OCI-LY7 (cell line): ENCODE measurements at regions of chr6 and their contacts with region 1.

Region 1: GRCh38 chr6:29964887-29965562 is 22.7 kb downstream of the HLA-A start:
- DNase-seq: peak; percentile 97
- H3K4me3 ChIP-seq: peak overlapping the region; percentile 67
- H3K27ac ChIP-seq: peak overlapping the region; percentile 93
- H3K4me1 ChIP-seq: peaks cover 49% of the 10 kb centered on the region
- CTCF ChIP-seq: no peak

Region 2: GRCh38 chr6:29847871-29848630 is 117.0 kb before region 1 on chr6:
- CTCF ChIA-PET with region 1: no interaction called
- POLR2A ChIA-PET with region 1: interaction called, 3 read pairs
- intact Hi-C with region 1: loop called (anchors 1 kb)
- DNase-seq: peak; percentile 70
- H3K4me3 ChIP-seq: no peak overlapping the region
- H3K27ac ChIP-seq: no peak overlapping the region
- H3K4me1 ChIP-seq: no peaks in the 10 kb centered on the region
- CTCF ChIP-seq: peak; percentile 97

Region 3: GRCh38 chr6:29942275-29943052 is 22.6 kb before region 1 on chr6 and contains the start of gene HLA-A:
- CTCF ChIA-PET with region 1: no interaction called
- POLR2A ChIA-PET with region 1: interaction called, 7 read pairs
- intact Hi-C with region 1: loop called (anchors 1 kb)
- DNase-seq: peak; percentile 94
- H3K4me3 ChIP-seq: peak within 1 kb of the TSS; percentile 86
- H3K27ac ChIP-seq: peak within 1 kb of the TSS; percentile 55
- H3K4me1 ChIP-seq: peaks cover 32% of the 10 kb centered on the region
- CTCF ChIP-seq: peak; percentile 32; the same call in 1 of the 2 replicates
- total RNA-seq, gene HLA-A: 672 and 804 TPM in 2 replicates

Region 4: GRCh38 chr6:30013291-30013922 is 48.4 kb after region 1 on chr6:
- CTCF ChIA-PET with region 1: no interaction called
- POLR2A ChIA-PET with region 1: no interaction called
- intact Hi-C with region 1: loop called (anchors 5 kb)
- DNase-seq: peak; percentile 51
- H3K4me3 ChIP-seq: no peak overlapping the region
- H3K27ac ChIP-seq: no peak overlapping the region
- H3K4me1 ChIP-seq: no peaks in the 10 kb centered on the region
- CTCF ChIP-seq: peak; percentile 94

Region 5: GRCh38 chr6:30066577-30067459 is 101.8 kb after region 1 on chr6 and contains the start of gene PPP1R11:
- CTCF ChIA-PET with region 1: no interaction called
- POLR2A ChIA-PET with region 1: interaction called, 3 read pairs
- intact Hi-C with region 1: loop called (anchors 2 kb)
- DNase-seq: peak; percentile 99
- H3K4me3 ChIP-seq: peak within 1 kb of the TSS; percentile 77
- H3K27ac ChIP-seq: peak within 1 kb of the TSS; percentile 83
- H3K4me1 ChIP-seq: peaks cover 35% of the 10 kb centered on the region
- CTCF ChIP-seq: no peak
- total RNA-seq, gene PPP1R11: 30.6 and 35.6 TPM in 2 replicates